Heart right ventricle (tissue), 16 donors: ENCODE measurements at regions of chr20 and their contacts with region 1.

Region 1: GRCh38 chr20:5205348-5206210 is 78.8 kb downstream of the CDS2 start:
- DNase-seq: peak; percentile 60 to 67
- ATAC-seq: peak; percentile 85 to 91 (median 90)
- H3K4me3 ChIP-seq: no peak overlapping the region
- H3K27ac ChIP-seq: no peak overlapping the region
- H3K4me1 ChIP-seq: peaks cover 0 to 19% (median 4%) of the 10 kb centered on the region in 9 donors
- H3K27me3 ChIP-seq: no peaks in the 10 kb centered on the region
- CTCF ChIP-seq: peak; percentile 57 to 90 (median 89)

Region 2: DNA sequence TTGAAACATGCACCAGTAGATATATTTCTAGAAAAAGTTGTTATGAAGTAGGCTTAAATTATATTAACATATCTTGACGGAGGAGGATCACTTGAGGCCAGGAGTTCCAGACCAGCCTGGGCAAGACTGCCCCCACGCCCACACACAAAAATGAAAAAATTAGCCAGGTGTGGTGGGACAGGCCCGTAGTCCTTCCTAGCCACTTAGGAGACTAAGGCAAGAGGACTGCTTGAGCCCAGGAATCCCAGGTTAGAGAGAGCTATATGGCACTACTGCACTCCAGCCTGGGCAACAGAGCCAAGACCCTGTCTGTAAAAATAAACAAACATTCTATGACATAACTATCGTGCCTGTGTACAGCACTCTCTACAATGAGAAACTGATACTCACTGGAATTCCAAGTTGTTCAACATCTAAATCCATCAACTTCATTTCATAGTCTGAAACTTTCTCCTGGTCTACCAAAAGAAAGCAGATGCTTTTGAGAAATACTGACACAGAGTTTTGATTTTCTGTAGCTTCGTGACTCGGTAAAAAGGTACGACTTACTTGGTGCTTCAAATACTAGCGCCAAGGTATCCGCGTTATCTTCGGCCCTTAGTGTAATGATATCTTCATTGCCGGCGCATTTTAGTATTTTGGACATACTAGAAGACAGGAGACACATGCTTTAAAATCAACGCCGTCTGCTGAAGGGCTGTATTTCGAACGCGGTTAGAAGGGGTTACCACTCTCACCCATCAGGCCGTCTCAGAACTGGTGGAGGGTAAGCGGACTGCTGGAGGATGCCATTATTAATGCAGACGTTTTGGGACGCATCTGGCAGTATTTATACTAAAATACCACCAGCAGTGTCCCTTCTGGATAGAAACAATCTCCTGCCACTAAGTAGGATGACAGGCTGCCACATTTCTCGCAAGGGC is 87.1 kb before region 1 on chr20:
- intact Hi-C with region 1: no loop called
- DNase-seq: no peak
- ATAC-seq: no peak
- H3K4me3 ChIP-seq: peak overlapping the region; percentile 48 to 92 (median 74)
- H3K27ac ChIP-seq: peak overlapping the region in 2 of 10 donors; percentile 85 to 90
- H3K4me1 ChIP-seq: peaks cover 5 to 45% (median 21%) of the 10 kb centered on the region in 9 donors
- H3K27me3 ChIP-seq: no peaks in the 10 kb centered on the region
- CTCF ChIP-seq: no peak

Region 3: DNA sequence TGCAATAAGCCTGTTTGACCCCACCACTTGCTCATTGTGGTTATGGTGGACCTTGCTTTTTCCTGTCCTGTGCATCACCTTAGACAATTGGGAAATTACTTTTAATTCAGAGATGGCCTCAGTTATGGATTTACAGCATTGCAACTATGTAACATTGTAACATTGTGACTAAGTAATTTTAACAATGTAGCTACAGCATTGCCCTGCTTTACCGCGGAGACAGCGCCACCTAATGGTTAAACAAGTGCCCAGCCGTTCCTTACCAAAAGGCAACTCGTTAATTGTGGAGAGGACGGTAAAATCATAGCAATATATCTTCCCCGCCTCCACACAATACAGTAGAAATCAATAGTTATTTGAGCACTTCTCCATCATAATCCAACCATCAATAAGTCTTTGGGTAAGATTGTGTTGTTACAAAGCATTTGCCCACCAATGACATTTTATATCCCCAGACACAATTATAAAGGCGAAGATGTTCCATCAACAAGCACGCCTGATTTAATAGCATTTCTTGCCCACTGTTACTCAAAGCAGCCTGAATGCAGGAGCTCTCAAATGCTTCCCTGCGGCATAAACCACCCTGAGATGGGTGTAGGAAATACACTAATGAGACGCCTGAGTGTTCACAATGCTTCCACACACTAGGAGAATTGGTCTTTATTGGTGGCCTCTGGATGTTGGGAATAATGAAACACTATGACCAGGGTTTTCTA is 17.5 kb after region 1 on chr20:
- intact Hi-C with region 1: loop called in 1 of 10 experiments (anchors 2 kb)
- DNase-seq: peak; percentile 29 to 48
- ATAC-seq: peak in 7 of 8 donors; percentile 37 to 76 (median 69)
- H3K4me3 ChIP-seq: no peak overlapping the region
- H3K27ac ChIP-seq: no peak overlapping the region
- H3K4me1 ChIP-seq: peaks cover 0 to 6% (median 0%) of the 10 kb centered on the region in 9 donors
- H3K27me3 ChIP-seq: no peaks in the 10 kb centered on the region
- CTCF ChIP-seq: peak; percentile 72 to 94 (median 85)